AG04450 (cell line): ENCODE measurements at regions of chr4 and their contacts with region 1.

Region 1: GRCh38 chr4:15882675-15883086 is 55.9 kb downstream of the FGFBP1 start:
- DNase-seq: peak; percentile 65
- H3K4me3 ChIP-seq: no peak overlapping the region
- H3K27ac ChIP-seq: no peak overlapping the region
- H3K27me3 ChIP-seq: peaks cover 24% of the 10 kb centered on the region
- CTCF ChIP-seq: peak; percentile 97

Region 2: DNA sequence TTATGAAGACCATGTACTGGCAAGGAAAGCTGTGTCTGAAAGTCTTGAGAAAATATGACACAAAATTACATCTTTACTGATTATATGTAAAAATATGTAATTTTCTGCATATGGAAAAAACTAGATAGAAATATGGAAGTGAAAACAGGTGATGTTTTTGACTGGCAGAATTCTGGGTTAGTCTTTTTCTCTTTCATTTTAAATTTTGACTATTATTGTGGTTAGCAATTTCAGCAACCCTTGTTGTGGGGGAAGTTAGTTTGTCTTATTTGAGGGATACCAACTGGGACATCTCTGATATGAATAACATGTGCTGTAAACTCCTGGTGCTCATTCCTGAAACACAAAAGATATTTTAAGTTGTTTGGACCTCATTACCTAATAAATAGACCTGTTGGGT is 930.3 kb before region 1 on chr4:
- CTCF ChIA-PET with region 1: no interaction called
- POLR2A ChIA-PET with region 1: no interaction called
- DNase-seq: no peak
- H3K4me3 ChIP-seq: no peak overlapping the region
- H3K27ac ChIP-seq: no peak overlapping the region
- H3K27me3 ChIP-seq: no peaks in the 10 kb centered on the region
- CTCF ChIP-seq: no peak

Region 3: GRCh38 chr4:15864651-15865566 is 17.8 kb before region 1 on chr4:
- CTCF ChIA-PET with region 1: interaction called, 18 read pairs
- POLR2A ChIA-PET with region 1: no interaction called
- DNase-seq: no peak
- H3K4me3 ChIP-seq: no peak overlapping the region
- H3K27ac ChIP-seq: no peak overlapping the region
- H3K27me3 ChIP-seq: no peaks in the 10 kb centered on the region
- CTCF ChIP-seq: no peak

Region 4: DNA sequence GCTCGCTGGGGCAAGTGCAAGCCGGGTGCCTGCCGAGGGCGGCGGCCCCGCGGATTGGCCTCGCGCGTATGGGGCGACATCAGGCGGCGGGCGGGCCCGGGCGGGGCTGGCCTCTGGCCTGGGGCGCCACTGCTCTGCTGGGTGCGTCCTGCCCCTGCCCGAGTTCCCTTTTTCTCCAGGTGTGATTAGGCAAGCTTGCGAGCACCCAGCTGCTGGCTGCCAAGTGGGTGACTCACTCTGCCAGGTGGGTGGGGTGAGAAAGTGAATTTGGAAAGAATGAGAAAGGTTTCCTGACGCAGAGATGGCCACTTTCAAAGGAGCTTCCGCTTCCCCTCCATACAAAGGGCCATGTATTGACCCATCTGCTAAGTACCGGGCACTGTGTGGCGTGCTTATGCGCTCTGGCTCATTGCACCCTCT is 23.4 kb after region 1 on chr4:
- CTCF ChIA-PET with region 1: interaction called, 10 read pairs
- POLR2A ChIA-PET with region 1: no interaction called
- DNase-seq: no peak
- H3K4me3 ChIP-seq: no peak overlapping the region
- H3K27ac ChIP-seq: no peak overlapping the region
- H3K27me3 ChIP-seq: no peaks in the 10 kb centered on the region
- CTCF ChIP-seq: no peak

Region 5: DNA sequence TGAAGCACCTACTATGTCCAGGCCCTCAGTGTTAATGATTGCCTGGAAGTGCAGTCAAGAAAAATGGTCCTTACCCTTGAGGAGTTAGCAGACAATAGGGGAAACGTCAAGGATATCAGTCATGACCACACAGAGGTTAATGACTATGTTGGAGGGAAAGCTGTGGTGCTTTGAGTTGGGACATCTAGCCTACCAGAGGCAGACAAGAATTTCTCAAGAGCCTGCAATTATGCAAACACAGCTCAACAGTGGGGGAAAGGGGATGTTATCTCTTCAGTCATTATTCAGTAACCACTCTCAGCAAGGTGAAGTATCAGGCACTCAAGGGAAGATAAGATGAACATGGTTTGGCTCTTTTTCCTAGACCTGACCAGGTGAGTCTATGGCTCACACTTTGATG is 62.8 kb after region 1 on chr4:
- CTCF ChIA-PET with region 1: interaction called, 11 read pairs
- POLR2A ChIA-PET with region 1: no interaction called
- DNase-seq: no peak
- H3K4me3 ChIP-seq: no peak overlapping the region
- H3K27ac ChIP-seq: no peak overlapping the region
- H3K27me3 ChIP-seq: peaks cover 11% of the 10 kb centered on the region
- CTCF ChIP-seq: no peak

Region 6: DNA sequence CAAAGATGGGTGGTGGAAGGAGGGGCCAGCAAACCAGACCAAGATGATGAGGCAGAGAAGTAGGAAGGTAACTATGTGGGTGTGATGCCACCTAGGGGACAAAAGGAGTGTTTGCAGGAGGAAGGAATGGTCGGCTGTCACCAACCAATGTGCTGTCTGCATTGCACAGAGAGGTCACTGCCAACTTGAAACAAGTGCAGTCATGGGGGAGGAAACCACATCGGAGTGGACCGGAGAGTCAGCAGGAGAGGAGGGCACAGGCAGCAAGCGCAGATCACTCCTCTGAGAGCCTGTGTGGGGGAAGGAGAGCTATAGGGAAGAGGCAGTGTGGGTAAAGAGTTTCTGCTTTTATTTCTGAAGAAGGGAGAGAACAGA is 118.8 kb after region 1 on chr4:
- CTCF ChIA-PET with region 1: interaction called, 57 read pairs
- POLR2A ChIA-PET with region 1: no interaction called
- DNase-seq: peak; percentile 45
- H3K4me3 ChIP-seq: no peak overlapping the region
- H3K27ac ChIP-seq: no peak overlapping the region
- H3K27me3 ChIP-seq: peaks cover 31% of the 10 kb centered on the region
- CTCF ChIP-seq: peak; percentile 94